Activated B cell treated with CpG ODN at 0.5 μM for 24 hours (primary cell): ENCODE measurements at regions of chr2 and their contacts with region 1.

Region 1: GRCh38 chr2:197310271-197310985 is at the start of gene ANKRD44:
- DNase-seq: peak; percentile 82
- ATAC-seq: peak; percentile 77
- H3K4me3 Mint-ChIP-seq: peak within 1 kb of the TSS; percentile 95
- H3K27ac Mint-ChIP-seq: peak within 1 kb of the TSS; percentile 95
- H3K4me1 Mint-ChIP-seq: peaks cover 48% of the 10 kb centered on the region
- H3K27me3 Mint-ChIP-seq: no peaks in the 10 kb centered on the region
- CTCF ChIP-seq: no peak
- total RNA-seq, gene ANKRD44: 154 and 185 TPM in 2 replicates

Region 2: GRCh38 chr2:197113275-197113711 is 197.1 kb before region 1 on chr2:
- CTCF ChIA-PET with region 1: interaction called, 81 read pairs
- POLR2A ChIA-PET with region 1: interaction called, 28 read pairs
- intact Hi-C with region 1: loop called (anchors 1 kb)
- DNase-seq: no peak
- ATAC-seq: peak; percentile 68
- H3K4me3 Mint-ChIP-seq: no peak overlapping the region
- H3K27ac Mint-ChIP-seq: peak overlapping the region; percentile 77
- H3K4me1 Mint-ChIP-seq: peaks cover 34% of the 10 kb centered on the region
- H3K27me3 Mint-ChIP-seq: no peaks in the 10 kb centered on the region
- CTCF ChIP-seq: no peak

Region 3: DNA sequence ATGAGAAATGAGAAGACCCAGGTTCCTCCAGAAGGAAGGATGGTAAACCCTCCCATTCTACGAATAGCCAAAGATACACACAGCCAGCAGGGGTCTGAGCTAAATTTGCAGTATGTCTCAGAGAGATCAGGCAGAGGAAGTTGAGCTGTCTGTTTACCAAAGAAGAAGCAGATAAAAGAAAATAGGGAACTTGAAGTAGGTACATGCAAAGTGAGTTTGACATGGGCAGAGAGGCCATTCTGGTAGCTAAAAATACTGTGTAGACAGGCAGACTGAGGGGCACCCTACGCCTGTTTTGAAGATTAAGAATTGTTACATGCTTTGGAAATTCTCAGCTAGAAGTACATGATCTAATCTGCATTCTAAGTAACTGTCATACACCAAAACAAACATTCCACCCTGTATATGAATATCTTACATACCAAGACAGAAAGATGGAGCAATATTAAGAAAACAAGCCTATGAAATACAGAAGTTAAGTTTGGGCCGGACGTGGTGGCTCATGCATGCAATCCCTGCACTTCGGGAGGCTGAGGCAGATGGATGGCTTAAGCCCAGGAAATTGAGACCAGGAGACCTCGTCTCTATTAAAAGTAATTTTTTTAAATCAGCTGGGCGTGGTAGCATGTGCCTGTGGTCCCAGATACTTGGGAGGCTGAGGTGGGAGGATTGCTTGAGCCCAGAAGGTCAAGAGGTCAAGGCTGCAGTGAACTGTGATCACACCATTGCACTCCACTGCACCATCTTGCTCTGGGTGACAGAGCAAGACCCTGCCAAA is 157.8 kb before region 1 on chr2:
- CTCF ChIA-PET with region 1: interaction called, 5 read pairs
- POLR2A ChIA-PET with region 1: interaction called, 12 read pairs
- intact Hi-C with region 1: loop called (anchors 1 kb)
- DNase-seq: no peak
- ATAC-seq: peak; percentile 84
- H3K4me3 Mint-ChIP-seq: peak overlapping the region; percentile 79
- H3K27ac Mint-ChIP-seq: peak overlapping the region; percentile 97
- H3K4me1 Mint-ChIP-seq: peaks cover 97% of the 10 kb centered on the region
- H3K27me3 Mint-ChIP-seq: no peaks in the 10 kb centered on the region
- CTCF ChIP-seq: no peak

Region 4: GRCh38 chr2:197198890-197199289 is 111.5 kb before region 1 on chr2:
- CTCF ChIA-PET with region 1: interaction called, 75 read pairs
- POLR2A ChIA-PET with region 1: interaction called, 134 read pairs
- intact Hi-C with region 1: loop called (anchors 2 kb)
- DNase-seq: peak; percentile 56
- ATAC-seq: peak; percentile 94
- H3K4me3 Mint-ChIP-seq: peak overlapping the region; percentile 88
- H3K27ac Mint-ChIP-seq: peak overlapping the region; percentile 96
- H3K4me1 Mint-ChIP-seq: peaks cover 83% of the 10 kb centered on the region
- H3K27me3 Mint-ChIP-seq: no peaks in the 10 kb centered on the region
- CTCF ChIP-seq: no peak

Region 5: DNA sequence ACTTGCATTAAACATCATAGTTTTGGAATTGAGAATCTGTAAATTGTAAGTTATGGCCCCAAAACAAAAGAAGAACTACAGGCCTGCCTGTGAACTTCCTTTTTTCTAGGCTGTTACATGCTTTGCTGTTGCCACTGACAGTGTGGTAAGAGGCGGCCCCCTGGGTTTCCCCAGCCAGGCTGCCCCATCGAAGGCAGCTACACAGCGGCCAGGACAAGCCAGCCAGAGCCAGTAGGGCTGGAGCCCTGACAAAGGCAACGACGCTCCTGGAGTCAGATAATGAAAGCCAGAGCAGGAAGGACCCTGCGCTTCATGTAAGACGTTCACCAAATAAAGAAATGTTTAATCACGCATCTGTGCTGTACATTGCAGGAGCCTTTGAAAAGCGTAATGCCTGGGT is 54.9 kb before region 1 on chr2:
- CTCF ChIA-PET with region 1: interaction called, 35 read pairs
- POLR2A ChIA-PET with region 1: interaction called, 98 read pairs
- intact Hi-C with region 1: loop called (anchors 1 kb)
- DNase-seq: peak; percentile 74
- ATAC-seq: peak; percentile 95
- H3K4me3 Mint-ChIP-seq: peak overlapping the region; percentile 77
- H3K27ac Mint-ChIP-seq: peak overlapping the region; percentile 94
- H3K4me1 Mint-ChIP-seq: peaks cover 78% of the 10 kb centered on the region
- H3K27me3 Mint-ChIP-seq: no peaks in the 10 kb centered on the region
- CTCF ChIP-seq: no peak

Region 6: DNA sequence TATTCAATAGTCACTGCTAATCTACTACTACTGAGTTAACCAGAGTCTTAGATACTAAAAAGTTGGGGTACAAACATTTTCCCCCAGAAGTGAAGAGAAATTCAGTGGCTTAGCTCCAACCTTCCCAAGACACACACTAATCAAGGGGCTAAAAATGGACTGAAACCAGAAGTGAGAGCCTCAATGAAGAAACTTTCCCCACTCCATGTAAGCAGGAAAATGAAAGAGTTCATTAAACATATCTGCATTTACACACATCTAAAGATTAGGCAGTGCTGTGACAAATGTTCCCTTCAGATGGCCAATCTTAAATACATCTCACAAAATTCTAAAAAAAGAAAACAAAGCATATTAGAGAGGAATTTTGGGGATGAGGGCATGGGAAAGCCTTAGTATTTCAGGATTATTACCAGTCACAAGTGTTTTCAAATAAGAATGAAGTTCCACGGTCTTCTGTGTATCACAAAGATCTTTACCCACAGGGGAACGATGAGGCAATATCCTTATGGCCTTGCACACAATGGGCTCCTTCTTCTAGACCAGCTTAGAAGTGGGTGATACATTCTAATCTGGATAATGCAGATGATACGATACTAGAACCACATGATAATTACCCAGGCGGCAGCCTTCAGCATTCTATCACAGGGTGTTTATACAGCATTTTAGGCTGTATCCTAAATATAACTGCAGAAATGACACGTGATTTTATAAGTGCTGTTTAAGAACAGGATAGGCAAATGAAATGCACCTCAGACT is 17.0 kb before region 1 on chr2:
- CTCF ChIA-PET with region 1: interaction called, 7 read pairs
- POLR2A ChIA-PET with region 1: interaction called, 173 read pairs
- intact Hi-C with region 1: loop called (anchors 1 kb)
- DNase-seq: no peak
- ATAC-seq: peak; percentile 41
- H3K4me3 Mint-ChIP-seq: peak overlapping the region; percentile 78
- H3K27ac Mint-ChIP-seq: peak overlapping the region; percentile 96
- H3K4me1 Mint-ChIP-seq: peaks cover 91% of the 10 kb centered on the region
- H3K27me3 Mint-ChIP-seq: no peaks in the 10 kb centered on the region
- CTCF ChIP-seq: no peak

Region 7: GRCh38 chr2:197434541-197435513 is 124.4 kb after region 1 on chr2 and contains the start of gene SF3B1:
- CTCF ChIA-PET with region 1: no interaction called
- POLR2A ChIA-PET with region 1: interaction called, 3 read pairs
- intact Hi-C with region 1: loop called (anchors 1 kb)
- DNase-seq: peak; percentile 98
- ATAC-seq: peak; percentile 96
- H3K4me3 Mint-ChIP-seq: peak within 1 kb of the TSS; percentile 99
- H3K27ac Mint-ChIP-seq: peak within 1 kb of the TSS; percentile 100
- H3K4me1 Mint-ChIP-seq: peaks cover 62% of the 10 kb centered on the region
- H3K27me3 Mint-ChIP-seq: no peaks in the 10 kb centered on the region
- CTCF ChIP-seq: no peak
- total RNA-seq, gene SF3B1: 328 and 380 TPM in 2 replicates